SK-N-SH (cell line): ENCODE measurements at regions of chr5 and their contacts with region 1.

Region 1: GRCh38 chr5:179795863-179796833 is 2.4 kb downstream of the LTC4S start:
- DNase-seq: peak; percentile 92
- H3K4me3 ChIP-seq: peak overlapping the region; percentile 57 to 59
- H3K27ac ChIP-seq: peak overlapping the region; percentile 36 to 43; a peak in 3 of 4 replicates
- H3K4me1 ChIP-seq: peaks cover 0 to 14% of the 10 kb centered on the region in 2 experiments; a peak in 1 of 4 replicates
- H3K27me3 ChIP-seq: no peaks in the 10 kb centered on the region
- CTCF ChIP-seq: peak; percentile 61
- EP300 ChIP-seq: no peak
- RAD21 ChIP-seq: peak; percentile 59

Region 2: DNA sequence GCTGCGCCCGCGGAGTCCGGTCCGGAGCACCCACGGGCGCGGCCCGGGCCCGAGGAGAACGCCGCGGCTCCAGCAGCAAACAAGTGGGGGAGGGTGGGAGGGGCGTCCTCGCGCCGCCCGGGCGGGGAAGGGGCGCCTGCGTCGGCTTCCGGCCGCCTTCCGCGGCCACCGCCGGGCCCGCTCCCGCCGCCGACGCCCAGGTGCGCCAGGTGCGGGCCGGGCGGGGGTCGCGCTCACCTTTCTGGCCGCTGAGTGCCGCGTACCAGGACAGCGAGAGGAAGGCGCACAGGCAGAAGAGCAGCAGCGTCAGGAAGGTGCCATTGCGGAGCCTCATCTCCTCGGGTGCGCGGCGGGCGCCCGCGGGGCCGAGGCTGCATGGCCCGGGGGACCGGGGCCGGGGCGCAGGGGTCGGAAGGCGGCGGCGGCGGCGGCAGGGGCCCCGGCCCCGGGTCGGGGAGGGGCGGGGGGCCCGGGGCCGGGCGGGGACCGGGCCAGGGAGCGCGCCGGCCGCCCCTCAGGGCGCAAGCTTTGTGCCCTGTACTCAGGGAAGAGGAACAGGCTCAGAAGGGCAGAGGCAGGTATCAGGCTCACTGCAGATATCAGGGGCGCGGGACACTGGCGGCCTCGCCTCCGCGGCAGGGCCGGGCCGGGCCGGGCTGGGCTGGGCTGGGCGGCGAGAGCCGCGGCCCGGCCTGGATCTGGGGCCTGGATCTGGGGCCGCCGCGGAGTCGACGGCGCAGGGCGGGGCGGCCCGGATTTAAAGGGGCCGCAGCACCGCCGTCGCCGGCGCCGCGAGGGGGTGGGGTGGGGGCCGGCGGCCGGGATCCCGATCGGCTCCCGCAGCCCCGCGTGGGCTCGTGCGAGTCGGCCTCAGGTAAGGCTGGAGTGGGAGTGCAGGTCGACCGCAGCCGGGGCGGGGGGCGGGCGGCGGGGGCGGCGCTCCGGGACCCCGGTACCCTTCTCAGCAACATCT is 10.4 kb after region 1 on chr5 and contains the start of gene MGAT4B:
- CTCF ChIA-PET with region 1: interaction called, 24 read pairs
- POLR2A ChIA-PET with region 1: interaction called, 6 read pairs
- DNase-seq: peak; percentile 96
- H3K4me3 ChIP-seq: peak within 1 kb of the TSS; percentile 72 to 88
- H3K27ac ChIP-seq: peak within 1 kb of the TSS; percentile 65 to 84
- H3K4me1 ChIP-seq: peaks cover 16 to 23% of the 10 kb centered on the region in 2 experiments; a peak in 3 of 4 replicates
- H3K27me3 ChIP-seq: no peaks in the 10 kb centered on the region
- CTCF ChIP-seq: no peak
- EP300 ChIP-seq: no peak
- RAD21 ChIP-seq: no peak
- polyA plus RNA-seq, gene MGAT4B: 174 and 190 TPM in 2 replicates

Region 3: GRCh38 chr5:179821581-179822432 is 25.7 kb after region 1 on chr5:
- CTCF ChIA-PET with region 1: interaction called, 10 read pairs
- POLR2A ChIA-PET with region 1: interaction called, 4 read pairs
- DNase-seq: peak; percentile 98
- H3K4me3 ChIP-seq: peak overlapping the region; percentile 97
- H3K27ac ChIP-seq: peak overlapping the region; percentile 84 to 94
- H3K4me1 ChIP-seq: peaks cover 22 to 39% of the 10 kb centered on the region in 2 experiments
- H3K27me3 ChIP-seq: no peaks in the 10 kb centered on the region
- CTCF ChIP-seq: no peak
- EP300 ChIP-seq: no peak
- RAD21 ChIP-seq: no peak

Region 4: GRCh38 chr5:179870402-179870903 is 74.3 kb after region 1 on chr5:
- CTCF ChIA-PET with region 1: no interaction called
- POLR2A ChIA-PET with region 1: no interaction called
- DNase-seq: peak; percentile 87
- H3K4me3 ChIP-seq: no peak overlapping the region
- H3K27ac ChIP-seq: no peak overlapping the region; a peak in 1 of 4 replicates
- H3K4me1 ChIP-seq: no peaks in the 10 kb centered on the region
- H3K27me3 ChIP-seq: no peaks in the 10 kb centered on the region
- CTCF ChIP-seq: peak; percentile 39
- EP300 ChIP-seq: no peak
- RAD21 ChIP-seq: peak; percentile 56

Region 5: DNA sequence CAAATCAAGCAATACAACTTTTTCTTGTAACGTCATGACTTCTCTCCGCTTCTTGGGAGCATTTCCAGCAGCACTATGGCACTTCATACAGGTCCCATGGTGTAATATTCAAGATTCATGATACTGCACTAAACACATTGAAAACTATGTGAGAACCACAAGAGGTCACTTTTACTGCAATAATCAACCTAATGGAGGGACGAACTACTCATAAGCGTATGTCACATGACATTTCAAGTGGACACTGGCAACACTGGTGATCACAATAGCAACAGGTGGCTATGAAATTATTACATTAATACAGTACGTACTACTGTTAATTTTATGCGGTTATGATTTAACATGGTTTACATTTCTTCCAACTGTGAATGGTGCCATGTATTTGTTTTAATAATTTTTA is 190.2 kb after region 1 on chr5:
- CTCF ChIA-PET with region 1: no interaction called
- POLR2A ChIA-PET with region 1: no interaction called
- DNase-seq: no peak
- H3K4me3 ChIP-seq: no peak overlapping the region
- H3K27ac ChIP-seq: no peak overlapping the region
- H3K4me1 ChIP-seq: no peaks in the 10 kb centered on the region
- H3K27me3 ChIP-seq: no peaks in the 10 kb centered on the region
- CTCF ChIP-seq: no peak
- EP300 ChIP-seq: no peak
- RAD21 ChIP-seq: peak; percentile 25

Region 6: GRCh38 chr5:180179442-180180420 is 383.6 kb after region 1 on chr5:
- CTCF ChIA-PET with region 1: no interaction called
- POLR2A ChIA-PET with region 1: no interaction called
- DNase-seq: no peak
- H3K4me3 ChIP-seq: no peak overlapping the region
- H3K27ac ChIP-seq: no peak overlapping the region
- H3K4me1 ChIP-seq: peaks cover 0 to 24% of the 10 kb centered on the region in 2 experiments; a peak in 1 of 4 replicates
- H3K27me3 ChIP-seq: no peaks in the 10 kb centered on the region
- CTCF ChIP-seq: no peak
- EP300 ChIP-seq: no peak
- RAD21 ChIP-seq: no peak